IMR-90 (cell line): ENCODE measurements at regions of chr17 and their contacts with region 1.

Region 1: DNA sequence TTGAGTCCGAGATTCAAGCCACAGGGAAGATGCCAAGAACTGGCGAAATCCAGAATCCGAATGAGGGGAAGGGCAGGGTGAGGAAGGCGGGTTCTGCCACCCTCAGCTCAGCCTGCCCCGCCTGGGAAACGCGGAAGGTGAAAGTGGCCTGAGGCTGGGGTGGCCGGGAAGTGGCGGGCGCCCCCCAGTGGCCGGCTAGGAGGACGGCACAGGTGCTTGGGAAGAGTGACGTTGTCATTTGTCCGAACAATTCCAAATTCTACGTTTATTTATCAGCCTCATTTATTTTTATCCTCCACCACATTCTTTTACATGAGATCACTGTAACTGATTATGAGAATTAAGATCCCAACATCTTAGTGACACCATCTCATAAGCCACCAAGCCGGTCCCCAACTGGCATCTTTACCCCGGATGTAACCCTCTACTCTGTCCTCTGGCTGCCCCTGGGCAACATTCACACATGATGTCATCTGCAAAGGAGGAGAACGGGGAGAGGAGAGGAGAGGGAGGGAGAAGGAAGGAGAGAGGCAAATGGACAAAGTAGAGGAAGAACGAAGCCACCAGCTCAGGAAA is 21.3 kb downstream of the SRCIN1 start:
- DNase-seq: peak; percentile 33
- ATAC-seq: peak; percentile 90
- H3K4me3 ChIP-seq: no peak overlapping the region
- H3K27ac ChIP-seq: no peak overlapping the region
- H3K4me1 ChIP-seq: no peaks in the 10 kb centered on the region
- H3K27me3 ChIP-seq: peaks cover 76% of the 10 kb centered on the region
- CTCF ChIP-seq: peak; percentile 89
- POLR2A ChIP-seq: no peak
- RAD21 ChIP-seq: peak; percentile 80

Region 2: DNA sequence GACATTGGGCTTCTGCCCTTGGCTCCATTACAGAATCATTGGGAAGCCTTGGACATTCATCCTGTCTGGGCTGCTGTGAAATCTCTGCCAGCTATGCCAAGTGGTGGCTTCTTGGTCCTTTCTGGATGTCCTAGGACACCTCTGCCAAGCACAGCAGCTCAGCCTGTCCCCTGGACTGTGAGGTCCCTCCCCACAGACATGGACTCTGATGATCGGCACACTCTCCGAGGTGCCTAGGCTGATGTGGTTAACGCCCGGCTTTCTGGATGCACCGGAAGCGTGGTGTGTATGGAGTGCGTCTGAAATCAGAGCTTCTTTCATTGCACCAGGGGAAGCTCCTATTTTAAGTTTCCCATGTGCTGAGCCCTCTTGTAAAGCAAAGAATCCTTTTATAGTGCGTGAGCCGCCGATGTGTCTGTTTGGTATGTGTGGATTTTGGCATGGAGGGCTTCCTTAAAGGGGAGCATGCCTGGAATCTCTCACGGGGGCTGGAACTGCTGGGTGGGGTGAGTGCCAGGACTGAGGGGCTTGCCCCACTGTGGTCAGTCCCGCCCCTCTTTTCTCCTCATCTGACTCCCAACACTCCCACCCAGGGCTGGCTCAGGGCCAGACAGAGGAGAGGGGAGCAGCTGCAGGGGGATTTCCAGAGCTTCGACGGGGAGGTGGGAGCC is 163.1 kb before region 1 on chr17:
- CTCF ChIA-PET with region 1: no interaction called
- POLR2A ChIA-PET with region 1: no interaction called
- dilution Hi-C with region 1: no loop called
- in situ Hi-C with region 1: no loop called
- intact Hi-C with region 1: loop called (anchors 5 kb)
- DNase-seq: peak; percentile 69
- ATAC-seq: peak; percentile 44
- H3K4me3 ChIP-seq: no peak overlapping the region
- H3K27ac ChIP-seq: no peak overlapping the region
- H3K4me1 ChIP-seq: peaks cover 17% of the 10 kb centered on the region
- H3K27me3 ChIP-seq: peaks cover 27% of the 10 kb centered on the region
- CTCF ChIP-seq: no peak
- POLR2A ChIP-seq: no peak
- RAD21 ChIP-seq: no peak